ENCODE measurements at regions of chr11 and their contacts with region 1.

Region 1: DNA sequence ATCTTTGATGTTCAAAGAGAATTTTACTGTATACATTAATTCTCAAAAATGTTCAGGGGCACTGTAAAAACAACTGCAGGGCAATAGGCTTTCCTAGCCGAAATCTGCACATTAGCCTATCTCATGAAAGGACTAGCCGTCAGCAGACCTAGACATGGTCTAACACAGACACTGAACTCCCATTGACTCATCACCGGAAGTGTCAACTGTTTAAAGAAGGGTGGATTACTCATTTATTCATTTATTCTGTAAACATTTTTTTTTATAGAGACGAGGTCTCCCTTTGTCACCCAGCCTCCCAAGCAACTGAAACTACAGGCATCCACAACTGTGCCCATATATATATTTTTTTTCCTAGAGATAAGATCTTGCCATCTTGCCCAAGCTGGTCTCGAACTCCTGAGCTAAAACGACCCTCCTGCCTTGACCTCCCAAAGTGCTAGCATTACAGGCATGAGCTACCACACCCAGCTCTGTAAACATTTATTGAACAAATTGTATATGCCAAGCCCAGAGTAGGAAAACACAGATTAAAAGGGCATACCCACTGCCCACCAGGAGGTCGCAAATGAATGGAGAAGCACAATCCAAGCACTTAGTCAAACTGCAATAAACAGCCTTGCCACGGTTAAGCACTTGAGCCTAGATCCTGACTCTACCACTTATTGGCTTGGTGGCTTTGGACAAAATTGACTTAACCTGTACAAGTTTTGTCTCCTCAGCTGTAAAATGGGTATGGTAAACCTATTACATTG is 26.6 kb downstream of the RAB30 start:
- DNase-seq: no peak
- H3K4me3 Mint-ChIP-seq: no peak overlapping the region
- H3K27ac Mint-ChIP-seq: no peak overlapping the region
- H3K4me1 Mint-ChIP-seq: no peaks in the 10 kb centered on the region
- H3K27me3 Mint-ChIP-seq: no peaks in the 10 kb centered on the region

Region 2: DNA sequence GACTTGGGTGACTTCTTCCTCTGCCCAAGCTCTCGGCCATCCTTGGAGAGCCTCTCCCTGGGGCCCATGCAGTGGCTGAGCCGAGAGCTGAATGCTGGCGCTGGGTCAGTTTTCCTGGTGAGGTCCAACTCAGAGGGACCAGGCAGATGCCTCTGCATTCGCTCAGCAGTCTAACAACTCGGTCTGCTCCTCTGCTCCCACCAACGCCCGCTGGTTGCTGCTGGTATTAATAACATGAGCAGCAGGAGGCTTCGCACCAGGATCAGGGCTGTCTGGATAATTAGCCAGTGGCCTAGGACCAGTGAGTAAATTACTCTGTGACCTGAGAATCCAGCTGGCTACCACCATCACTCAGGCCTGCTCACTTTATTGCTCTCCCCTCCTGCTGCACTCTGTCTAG is 233.8 kb before region 1 on chr11:
- CTCF ChIA-PET with region 1: no interaction called
- POLR2A ChIA-PET with region 1: no interaction called
- DNase-seq: no peak
- H3K4me3 Mint-ChIP-seq: no peak overlapping the region
- H3K27ac Mint-ChIP-seq: no peak overlapping the region
- H3K4me1 Mint-ChIP-seq: no peaks in the 10 kb centered on the region
- H3K27me3 Mint-ChIP-seq: peaks cover 36% of the 10 kb centered on the region

Region 3: DNA sequence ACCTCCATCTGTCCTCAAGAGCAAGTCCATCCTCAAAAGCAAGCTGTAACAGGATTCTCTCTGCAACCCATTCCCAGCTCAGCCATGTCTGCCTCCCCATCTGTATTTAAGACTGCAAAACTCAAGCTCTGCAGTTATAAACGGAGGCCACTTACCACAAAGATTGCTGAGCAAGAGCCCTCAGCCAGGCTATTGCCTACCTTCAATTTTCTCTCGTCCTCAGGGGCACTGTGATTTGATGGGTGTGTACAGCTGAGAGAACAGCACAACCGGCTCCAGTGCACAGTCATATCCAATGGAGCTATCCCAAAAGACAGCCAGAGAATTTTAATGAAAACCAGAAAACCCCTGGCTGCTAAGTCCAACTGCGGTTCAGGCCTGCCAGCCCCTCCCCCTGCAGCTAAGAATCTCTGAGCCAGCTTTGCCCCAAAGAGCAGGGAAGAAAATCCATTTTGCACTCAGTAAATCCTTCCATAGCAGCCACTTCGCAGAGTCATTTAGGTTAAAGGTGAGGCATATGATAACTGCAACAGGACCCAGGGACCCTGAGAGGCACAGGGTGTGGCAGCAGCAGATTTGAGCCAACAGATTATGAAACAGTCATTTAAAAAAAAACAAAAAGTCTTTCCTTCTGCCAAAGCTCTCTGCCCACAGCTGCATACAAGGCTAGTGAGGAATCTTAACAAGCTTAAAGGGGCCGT is 11.0 kb before region 1 on chr11:
- CTCF ChIA-PET with region 1: interaction called, 12 read pairs
- POLR2A ChIA-PET with region 1: no interaction called
- DNase-seq: no peak
- H3K4me3 Mint-ChIP-seq: no peak overlapping the region
- H3K27ac Mint-ChIP-seq: no peak overlapping the region
- H3K4me1 Mint-ChIP-seq: peaks cover 23% of the 10 kb centered on the region
- H3K27me3 Mint-ChIP-seq: no peaks in the 10 kb centered on the region

Region 4: DNA sequence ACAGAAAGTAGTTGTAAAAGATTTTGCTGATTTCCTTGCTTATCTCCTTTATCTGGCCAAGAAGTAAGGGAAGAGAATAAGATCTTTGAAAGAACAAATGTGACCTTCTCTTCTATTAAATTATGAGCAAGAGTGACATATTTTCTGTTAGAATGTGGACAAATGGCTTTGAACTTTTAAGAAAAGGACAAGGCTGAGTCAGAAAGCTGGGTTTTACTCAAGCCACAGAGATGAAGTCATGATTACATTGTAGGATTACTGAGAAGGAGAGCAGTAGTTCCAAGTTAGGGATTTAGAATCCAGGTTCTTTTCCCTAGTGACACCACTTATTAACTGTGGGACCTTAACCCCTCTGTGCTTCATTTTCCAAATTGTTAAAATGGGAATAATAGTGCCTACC is 227.5 kb after region 1 on chr11:
- CTCF ChIA-PET with region 1: no interaction called
- POLR2A ChIA-PET with region 1: no interaction called
- DNase-seq: no peak
- H3K4me3 Mint-ChIP-seq: no peak overlapping the region
- H3K27ac Mint-ChIP-seq: no peak overlapping the region
- H3K4me1 Mint-ChIP-seq: peaks cover 1% of the 10 kb centered on the region
- H3K27me3 Mint-ChIP-seq: no peaks in the 10 kb centered on the region